CD4-positive, alpha-beta T cell (primary cell): ENCODE measurements at regions of chr20 and their contacts with region 1.

Region 1: DNA sequence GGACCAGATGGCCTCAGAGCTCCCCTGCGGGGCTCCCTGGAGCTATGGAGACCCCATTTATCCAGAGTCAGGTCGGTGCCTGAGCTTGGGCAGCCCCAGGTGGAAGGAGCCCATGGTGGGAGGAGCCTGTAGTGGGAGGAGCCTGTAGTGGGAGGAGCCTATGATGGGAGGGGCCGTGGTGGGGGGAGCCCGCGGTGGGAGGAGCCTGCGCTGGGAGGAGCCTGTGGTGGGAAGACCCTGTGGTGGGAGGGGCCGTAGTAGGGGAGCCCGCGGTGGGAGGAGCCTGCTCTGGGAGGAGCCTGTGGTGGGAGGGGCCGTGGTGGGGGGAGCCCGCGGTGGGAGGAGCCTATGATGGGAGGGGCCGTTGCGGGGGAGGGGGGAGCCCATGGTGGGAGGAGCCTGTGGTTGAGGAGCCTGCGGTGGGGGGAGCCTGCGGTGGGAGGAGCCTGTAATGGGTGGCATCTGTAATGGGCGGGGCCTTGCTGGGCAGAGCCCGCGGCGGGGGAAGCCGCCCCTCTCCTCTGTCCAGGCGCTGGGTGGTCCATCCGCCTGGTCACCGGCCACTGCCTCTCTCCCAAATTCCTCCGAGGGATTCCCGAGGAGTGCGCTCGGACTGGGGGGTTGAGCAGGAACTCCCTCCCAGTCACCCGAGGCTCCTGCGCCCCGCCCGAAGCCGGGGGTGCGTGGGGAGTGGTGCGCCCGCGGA is 579 bp upstream of the FNDC11 start:
- DNase-seq: peak; percentile 74 to 96 (median 90)
- ATAC-seq: peak; percentile 83
- H3K4me3 ChIP-seq: peak overlapping the region; percentile 68
- H3K4me3 Mint-ChIP-seq: peak overlapping the region; percentile 90
- H3K27ac ChIP-seq: peak overlapping the region; percentile 73 to 82
- H3K27ac Mint-ChIP-seq: peak overlapping the region; percentile 91
- H3K4me1 ChIP-seq: peaks cover 39% of the 10 kb centered on the region
- H3K4me1 Mint-ChIP-seq: peaks cover 18% of the 10 kb centered on the region
- H3K27me3 ChIP-seq: peaks cover 3 to 4% of the 10 kb centered on the region in 2 experiments
- H3K27me3 Mint-ChIP-seq: no peaks in the 10 kb centered on the region
- CTCF ChIP-seq: no peak

Region 2: DNA sequence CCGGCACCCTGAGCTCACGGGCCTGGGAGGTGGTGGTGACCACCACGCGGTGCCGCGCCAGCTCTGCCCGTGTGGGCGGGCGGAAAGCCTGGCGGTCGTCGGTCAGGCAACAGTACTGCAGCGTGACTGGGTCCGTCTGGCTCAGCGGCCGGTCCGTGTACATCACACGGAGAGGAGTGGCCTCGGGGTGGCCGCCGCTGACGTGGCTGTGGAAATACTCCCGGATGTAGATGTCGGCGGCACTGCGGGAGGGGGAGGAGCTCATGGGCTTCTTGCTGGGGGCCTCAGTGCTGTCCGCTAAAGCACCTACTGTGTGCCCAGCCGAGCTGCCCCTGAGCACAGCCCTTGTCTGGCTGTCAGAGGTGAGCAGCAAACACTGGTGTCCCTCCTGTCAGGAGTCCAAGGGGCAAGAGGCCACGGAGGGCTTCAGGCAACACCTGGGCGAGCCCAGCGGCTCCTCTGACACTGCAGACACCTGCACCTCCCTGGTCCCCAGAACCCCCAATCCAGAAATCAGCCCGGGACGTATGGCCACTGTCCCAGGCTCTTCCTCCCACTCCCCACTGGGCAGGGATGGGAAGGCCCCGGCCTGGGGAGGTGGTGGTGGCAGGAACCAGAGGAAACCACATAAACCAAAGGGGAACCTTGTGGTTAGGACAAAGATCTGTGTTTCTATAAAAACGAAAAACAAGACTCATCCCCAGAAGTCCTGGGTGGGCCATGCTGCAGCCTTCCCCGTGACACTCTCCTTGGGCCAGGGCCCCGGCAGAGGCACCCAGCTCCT is 14.2 kb after region 1 on chr20:
- CTCF ChIA-PET with region 1: no interaction called
- POLR2A ChIA-PET with region 1: interaction called, 16 read pairs
- intact Hi-C with region 1: loop called in 1 of 2 experiments (anchors 2 kb)
- DNase-seq: peak; percentile 25 to 82 (median 38)
- ATAC-seq: peak; percentile 57
- H3K4me3 ChIP-seq: peak overlapping the region; percentile 52
- H3K4me3 Mint-ChIP-seq: peak overlapping the region; percentile 78
- H3K27ac ChIP-seq: no peak overlapping the region
- H3K27ac Mint-ChIP-seq: peak overlapping the region; percentile 33
- H3K4me1 ChIP-seq: peaks cover 39% of the 10 kb centered on the region
- H3K4me1 Mint-ChIP-seq: peaks cover 16% of the 10 kb centered on the region
- H3K27me3 ChIP-seq: no peaks in the 10 kb centered on the region
- H3K27me3 Mint-ChIP-seq: no peaks in the 10 kb centered on the region
- CTCF ChIP-seq: no peak